ENCODE measurements at regions of chr4 and their contacts with region 1.

Region 1: GRCh38 chr4:118278473-118279274 is 74.1 kb downstream of the PRSS12 start:
- DNase-seq: peak; percentile 96 to 97
- ATAC-seq: peak; percentile 94 to 95
- H3K4me3 ChIP-seq: peak overlapping the region; percentile 68 to 99 (median 88)
- H3K27ac ChIP-seq: peak overlapping the region; percentile 91 to 99 (median 98)
- H3K4me1 ChIP-seq: peaks cover 23 to 26% of the 10 kb centered on the region in 2 donors
- H3K27me3 ChIP-seq: no peaks in the 10 kb centered on the region
- CTCF ChIP-seq: no peak
- POLR2A ChIP-seq: peak; percentile 89 to 95

Region 2: GRCh38 chr4:118352843-118353533 is 74.3 kb after region 1 on chr4 and contains the start of gene PRSS12:
- in situ Hi-C with region 1: no loop called
- intact Hi-C with region 1: loop called (anchors 1 kb)
- DNase-seq: no peak
- ATAC-seq: peak; percentile 45 to 66
- H3K4me3 ChIP-seq: peak within 1 kb of the TSS; percentile 34 to 45 (median 40)
- H3K27ac ChIP-seq: no peak within 1 kb of the TSS
- H3K4me1 ChIP-seq: peaks cover 4% of the 10 kb centered on the region in 2 donors
- H3K27me3 ChIP-seq: peaks cover 43 to 56% (median 45%) of the 10 kb centered on the region in 3 donors
- CTCF ChIP-seq: peak; percentile 17 to 65 (median 48)
- POLR2A ChIP-seq: no peak
- total RNA-seq, gene PRSS12: 0.09 to 0.29 TPM in 2 of 4 donors, not detected in the others

Region 3: GRCh38 chr4:118586357-118586790 is 307.7 kb after region 1 on chr4:
- in situ Hi-C with region 1: no loop called
- intact Hi-C with region 1: loop called (anchors 10 kb)
- DNase-seq: peak in 1 of 2 donors; percentile 16
- ATAC-seq: peak in 1 of 2 donors; percentile 34
- H3K4me3 ChIP-seq: peak overlapping the region in 1 of 4 donors; percentile 17
- H3K27ac ChIP-seq: no peak overlapping the region
- H3K4me1 ChIP-seq: peaks cover 0 to 9% of the 10 kb centered on the region in 2 donors
- H3K27me3 ChIP-seq: no peaks in the 10 kb centered on the region
- CTCF ChIP-seq: no peak
- POLR2A ChIP-seq: no peak

Region 4: DNA sequence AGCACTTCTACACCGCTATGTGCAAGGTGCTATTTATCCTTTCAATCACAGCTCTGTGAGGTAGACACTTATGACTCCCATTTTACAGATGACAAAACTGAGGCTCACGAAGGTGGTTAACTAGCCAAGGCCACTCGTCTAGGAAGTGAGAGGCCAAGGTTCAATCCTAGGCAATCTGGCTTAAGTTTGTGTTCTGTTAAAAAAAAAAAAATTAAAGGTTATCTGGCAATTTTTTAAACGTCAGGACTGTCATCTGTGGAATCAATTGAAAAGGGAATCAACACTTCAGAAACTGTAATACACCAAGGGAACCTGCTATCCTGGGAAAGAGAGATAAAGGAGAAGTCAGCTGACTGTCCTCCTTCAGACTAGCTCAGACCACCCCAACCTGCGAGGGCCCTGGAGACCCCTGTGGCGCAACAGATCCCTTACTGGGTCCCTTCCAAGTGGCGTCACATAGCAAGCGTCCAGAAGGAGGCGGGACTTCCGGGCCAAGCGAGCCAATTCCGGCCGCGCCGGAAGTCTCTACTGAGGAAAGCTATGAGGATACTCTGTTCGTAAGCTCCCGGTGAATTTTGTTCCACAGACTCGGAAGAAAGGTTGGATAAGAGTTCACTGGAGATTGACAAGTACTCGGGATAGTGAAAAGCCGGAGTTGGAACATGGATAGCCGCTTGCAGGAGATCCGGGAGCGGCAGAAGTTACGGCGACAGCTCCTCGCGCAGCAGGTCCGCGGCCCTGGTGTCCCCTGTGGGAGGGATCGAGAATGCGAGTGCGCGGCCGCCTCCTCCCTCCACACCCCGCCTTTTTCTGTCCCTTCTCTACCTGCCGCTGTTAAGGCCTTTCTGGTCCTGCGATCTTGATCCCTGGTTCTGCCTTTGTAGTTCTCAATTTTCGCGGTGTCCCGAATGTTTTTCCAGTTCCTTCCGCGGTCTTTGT is 406.5 kb after region 1 on chr4 and contains the start of gene METTL14:
- in situ Hi-C with region 1: loop called in 2 of 4 experiments (anchors 25 kb)
- intact Hi-C with region 1: loop called (anchors 10 kb)
- DNase-seq: peak; percentile 78 to 88
- ATAC-seq: peak; percentile 99 to 100
- H3K4me3 ChIP-seq: peak within 1 kb of the TSS; percentile 61 to 80 (median 75)
- H3K27ac ChIP-seq: peak within 1 kb of the TSS; percentile 86 to 91 (median 86)
- H3K4me1 ChIP-seq: peaks cover 17 to 19% of the 10 kb centered on the region in 2 donors
- H3K27me3 ChIP-seq: no peaks in the 10 kb centered on the region
- CTCF ChIP-seq: peak in 2 of 5 experiments; percentile 40 to 44
- POLR2A ChIP-seq: peak; percentile 49 to 54
- total RNA-seq, gene METTL14: 8.2 to 31.8 (median 17.3) TPM